GM18951 (cell line): ENCODE measurements at regions of chr1 and their contacts with region 1.

Region 1: GRCh38 chr1:37989361-37989930 is 376 bp downstream of the SF3A3 start:
- POLR2A ChIP-seq: no peak

Region 2: GRCh38 chr1:37595440-37596319 is 393.8 kb before region 1 on chr1 and contains the start of gene GNL2:
- in situ Hi-C with region 1: loop called (anchors 25 kb)
- POLR2A ChIP-seq: peak; percentile 91